T-cell (primary cell): ENCODE measurements at regions of chr19 and their contacts with region 1.

Region 1: DNA sequence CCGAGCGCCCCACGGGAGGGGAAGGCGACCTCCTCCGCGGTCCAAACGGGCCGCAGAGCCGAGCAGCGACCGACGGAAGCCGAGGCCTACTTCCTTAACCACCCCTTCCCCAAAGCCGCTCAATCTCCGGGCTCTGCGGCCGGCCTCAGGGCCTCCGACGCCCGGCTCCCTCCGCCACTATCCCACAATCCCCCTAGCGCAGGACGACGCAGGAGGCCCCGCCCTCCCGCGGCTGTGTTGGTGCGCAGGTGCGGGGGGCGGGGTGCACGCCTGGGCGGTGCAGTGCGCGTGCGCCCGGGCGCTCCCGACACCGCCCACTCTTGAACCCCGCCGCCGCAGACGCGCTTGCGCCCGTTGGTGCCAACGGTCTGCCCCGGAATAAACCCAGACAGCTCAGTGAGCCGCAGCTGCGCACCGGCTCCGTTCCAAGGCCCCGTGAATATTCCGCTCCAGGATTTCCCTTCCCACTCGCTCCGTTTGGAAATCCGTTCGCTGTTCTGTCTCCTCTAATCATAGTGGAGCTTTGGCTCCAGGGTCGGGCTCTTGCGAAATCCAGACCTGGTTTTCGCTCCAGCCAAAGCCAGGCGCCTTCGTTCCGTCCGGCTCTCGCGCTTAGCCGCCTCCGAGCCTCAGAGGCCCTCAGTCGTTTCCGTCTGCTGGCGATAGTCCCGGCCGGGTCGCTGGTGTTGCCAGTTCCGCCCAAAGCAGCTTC is at the start of gene PPP6R1:
- DNase-seq: peak; percentile 84 to 98 (median 91)
- ATAC-seq: peak; percentile 81 to 83 (median 82)
- H3K4me3 ChIP-seq: peak within 1 kb of the TSS; percentile 79 to 86
- H3K4me3 Mint-ChIP-seq: peak within 1 kb of the TSS; percentile 96 to 100 (median 97)
- H3K27ac ChIP-seq: peak within 1 kb of the TSS; percentile 94
- H3K27ac Mint-ChIP-seq: peak within 1 kb of the TSS; percentile 99
- H3K4me1 ChIP-seq: peaks cover 23 to 49% of the 10 kb centered on the region in 2 experiments
- H3K4me1 Mint-ChIP-seq: peaks cover 38 to 48% (median 46%) of the 10 kb centered on the region in 3 donors
- H3K27me3 ChIP-seq: no peaks in the 10 kb centered on the region
- H3K27me3 Mint-ChIP-seq: no peaks in the 10 kb centered on the region
- total RNA-seq, gene PPP6R1: 173 to 208 (median 194) TPM

Region 2: DNA sequence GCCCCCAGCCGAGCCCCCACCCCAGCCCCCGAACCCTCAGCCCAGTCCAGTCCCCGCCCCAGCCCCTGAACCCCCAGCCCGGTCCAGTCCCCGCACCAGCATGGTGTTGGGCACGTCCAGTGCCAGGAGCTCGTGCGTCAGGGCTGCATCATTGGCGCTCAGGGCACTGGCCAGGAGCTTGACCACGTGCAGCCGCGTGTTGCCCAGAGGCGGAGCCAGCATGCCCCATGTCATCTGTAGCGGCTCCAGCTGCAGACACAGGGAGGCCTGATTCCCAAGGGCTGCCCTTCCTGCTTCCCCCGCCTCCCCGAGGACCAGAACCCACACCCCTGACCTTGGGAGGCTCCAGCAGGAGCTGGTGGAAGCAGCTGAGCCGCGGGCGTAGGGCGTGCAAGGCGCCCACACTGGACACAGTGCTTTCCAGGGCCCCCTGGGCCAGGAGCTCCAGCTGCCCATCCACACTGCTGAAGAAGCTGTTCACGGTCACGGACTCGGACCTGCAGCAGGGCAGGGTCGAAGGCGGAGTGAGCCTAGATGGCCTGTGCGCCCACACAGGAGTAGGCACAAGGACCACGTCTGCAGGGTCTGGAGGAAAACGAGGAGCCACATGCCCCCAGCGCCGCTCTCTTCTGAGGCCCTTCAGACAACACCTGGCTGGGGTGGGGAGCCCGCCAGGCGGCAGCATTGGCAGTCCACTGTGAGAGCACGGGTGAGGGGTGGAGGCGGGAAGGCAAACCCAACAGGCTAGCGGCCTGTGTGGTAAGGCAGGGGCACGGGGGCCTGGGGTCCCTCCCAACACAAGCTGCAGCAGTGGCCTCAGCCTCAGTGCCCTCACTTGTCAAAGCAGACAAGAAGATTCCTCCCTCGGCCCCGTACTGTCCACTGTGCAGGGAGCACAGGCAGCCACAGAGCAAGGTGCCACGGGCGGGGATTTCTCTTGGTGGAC is 17.6 kb before region 1 on chr19:
- CTCF ChIA-PET with region 1: no interaction called
- POLR2A ChIA-PET with region 1: interaction called in 1 of 2 experiments, 12 read pairs
- DNase-seq: no peak
- ATAC-seq: no peak
- H3K4me3 ChIP-seq: no peak overlapping the region
- H3K4me3 Mint-ChIP-seq: no peak overlapping the region
- H3K27ac ChIP-seq: no peak overlapping the region
- H3K27ac Mint-ChIP-seq: no peak overlapping the region
- H3K4me1 ChIP-seq: no peaks in the 10 kb centered on the region
- H3K4me1 Mint-ChIP-seq: peaks cover 0 to 3% (median 2%) of the 10 kb centered on the region in 3 donors
- H3K27me3 ChIP-seq: no peaks in the 10 kb centered on the region
- H3K27me3 Mint-ChIP-seq: no peaks in the 10 kb centered on the region

Region 3: GRCh38 chr19:55247608-55248099 is 11.3 kb before region 1 on chr19:
- CTCF ChIA-PET with region 1: no interaction called
- POLR2A ChIA-PET with region 1: interaction called in 1 of 2 experiments, 10 read pairs
- DNase-seq: no peak
- ATAC-seq: no peak
- H3K4me3 ChIP-seq: no peak overlapping the region
- H3K4me3 Mint-ChIP-seq: no peak overlapping the region
- H3K27ac ChIP-seq: no peak overlapping the region
- H3K27ac Mint-ChIP-seq: no peak overlapping the region
- H3K4me1 ChIP-seq: peaks cover 16 to 56% of the 10 kb centered on the region in 2 experiments
- H3K4me1 Mint-ChIP-seq: peaks cover 28 to 48% (median 45%) of the 10 kb centered on the region in 3 donors
- H3K27me3 ChIP-seq: no peaks in the 10 kb centered on the region
- H3K27me3 Mint-ChIP-seq: no peaks in the 10 kb centered on the region

Region 4: DNA sequence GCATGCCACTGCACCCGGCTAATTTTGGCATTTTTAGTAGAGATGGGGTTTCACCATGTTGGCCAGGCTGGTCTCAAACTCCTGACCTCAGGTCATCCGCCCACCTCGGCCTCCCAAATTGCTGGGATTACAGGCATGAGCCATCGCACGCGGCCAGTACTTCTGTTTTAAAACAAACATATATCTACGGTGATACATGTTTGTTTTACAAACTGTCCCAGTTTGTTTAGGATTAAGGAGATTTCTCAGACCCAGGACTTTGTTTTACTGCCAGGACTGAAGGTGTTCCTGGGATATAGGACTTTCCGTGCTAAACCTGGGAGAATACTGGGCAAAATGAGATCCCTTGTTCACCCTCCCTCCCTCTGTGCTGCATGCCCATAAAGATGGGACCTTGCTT is 697.4 kb after region 1 on chr19:
- CTCF ChIA-PET with region 1: no interaction called
- POLR2A ChIA-PET with region 1: no interaction called
- DNase-seq: no peak
- ATAC-seq: no peak
- H3K4me3 ChIP-seq: no peak overlapping the region
- H3K4me3 Mint-ChIP-seq: no peak overlapping the region
- H3K27ac ChIP-seq: no peak overlapping the region
- H3K27ac Mint-ChIP-seq: no peak overlapping the region
- H3K4me1 ChIP-seq: no peaks in the 10 kb centered on the region
- H3K4me1 Mint-ChIP-seq: no peaks in the 10 kb centered on the region
- H3K27me3 ChIP-seq: no peaks in the 10 kb centered on the region
- H3K27me3 Mint-ChIP-seq: no peaks in the 10 kb centered on the region